Panc1 (cell line): ENCODE measurements at regions of chr11 and their contacts with region 1.

Region 1: GRCh38 chr11:12088047-12088481 is 22.3 kb upstream of the MICAL2 start:
- DNase-seq: no peak
- ATAC-seq: 0 out of 2 replicates have a peak, but pooled peaks have one; percentile 22
- H3K4me3 ChIP-seq: no peak overlapping the region
- H3K27ac ChIP-seq: peak overlapping the region; percentile 94
- H3K4me1 ChIP-seq: peaks cover 49% of the 10 kb centered on the region
- H3K27me3 ChIP-seq: no peaks in the 10 kb centered on the region
- CTCF ChIP-seq: peak; percentile 62; the same call in 1 of the 2 replicates

Region 2: DNA sequence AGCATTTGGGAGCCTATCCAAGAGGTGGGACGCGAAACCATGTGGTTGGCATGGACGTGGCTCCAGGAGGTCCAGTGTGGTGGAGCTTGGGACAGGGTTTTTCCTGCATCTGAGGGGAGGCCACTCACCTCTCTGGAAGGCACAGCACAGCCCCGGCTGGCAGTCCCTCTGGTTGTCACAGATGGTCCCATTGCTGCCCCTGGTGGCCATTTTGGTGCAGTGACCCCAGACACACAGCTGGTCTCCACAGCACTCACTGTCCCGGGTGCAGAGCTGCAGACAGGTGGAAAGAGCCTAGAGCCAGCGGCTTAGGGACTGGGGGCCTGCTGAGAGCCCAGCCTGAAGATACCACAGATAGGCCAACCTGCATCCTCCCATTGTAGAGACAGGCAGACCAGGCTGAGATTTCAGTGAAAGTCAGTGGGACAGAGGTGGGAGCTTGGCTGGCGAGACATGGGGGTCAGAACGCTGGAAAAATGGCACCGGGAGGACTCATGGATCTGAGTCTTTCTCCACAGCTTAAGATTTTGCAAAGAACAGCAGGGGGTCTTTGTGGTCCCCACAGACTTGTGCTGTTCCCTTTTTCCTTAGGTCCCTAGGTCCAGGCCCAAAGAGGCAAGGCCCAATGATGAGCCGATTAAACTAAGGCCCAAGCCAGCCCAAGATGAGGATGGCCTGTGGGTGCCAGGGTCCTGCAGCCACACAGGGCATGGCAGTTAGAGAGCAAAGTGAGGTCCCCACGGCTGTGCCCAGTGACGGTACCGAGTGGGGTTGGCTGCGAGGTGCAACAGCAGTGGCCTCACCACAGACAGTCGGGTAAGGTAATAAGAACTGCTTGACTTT is 121.0 kb before region 1 on chr11:
- CTCF ChIA-PET with region 1: no interaction called
- POLR2A ChIA-PET with region 1: no interaction called
- in situ Hi-C with region 1: no loop called
- intact Hi-C with region 1: no loop called
- DNase-seq: peak; percentile 55
- ATAC-seq: peak; percentile 94
- H3K4me3 ChIP-seq: no peak overlapping the region
- H3K27ac ChIP-seq: no peak overlapping the region
- H3K4me1 ChIP-seq: no peaks in the 10 kb centered on the region; the same call in 1 of the 2 replicates
- H3K27me3 ChIP-seq: no peaks in the 10 kb centered on the region
- CTCF ChIP-seq: peak; percentile 93

Region 3: DNA sequence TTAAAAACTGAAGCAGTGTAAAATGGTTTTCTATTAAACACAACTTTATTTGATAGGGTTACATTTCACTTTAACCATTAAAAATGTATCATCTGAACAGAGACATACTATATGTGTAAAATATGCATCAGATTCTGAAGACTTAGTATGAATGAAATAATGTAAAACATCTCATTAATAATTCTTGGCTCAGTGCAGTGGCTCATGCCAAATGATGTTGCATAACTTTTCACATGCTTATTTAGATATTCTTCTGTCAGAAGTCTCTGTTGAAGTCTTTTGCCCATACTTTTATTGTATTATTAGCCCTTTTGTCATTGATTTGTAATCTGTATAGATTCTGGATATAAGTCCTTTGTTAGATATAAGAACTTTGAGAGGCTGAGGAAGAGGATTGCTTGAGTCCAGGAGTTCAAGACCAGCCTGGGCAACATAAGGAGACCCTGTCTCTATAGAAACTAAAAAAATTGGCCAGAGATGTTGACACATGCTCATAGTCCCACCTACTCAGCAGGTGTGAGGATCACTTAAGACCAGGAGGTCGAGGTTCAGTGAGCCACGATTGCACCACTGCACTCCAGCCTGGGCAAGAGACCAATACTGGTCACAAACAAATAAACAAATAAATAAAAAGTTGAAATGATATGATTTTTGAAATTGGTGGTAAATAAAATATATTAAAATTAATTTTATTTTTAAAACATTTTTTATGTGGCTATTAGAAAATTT is 215.5 kb after region 1 on chr11:
- CTCF ChIA-PET with region 1: no interaction called
- POLR2A ChIA-PET with region 1: no interaction called
- in situ Hi-C with region 1: no loop called
- intact Hi-C with region 1: no loop called
- DNase-seq: no peak
- ATAC-seq: no peak
- H3K4me3 ChIP-seq: no peak overlapping the region
- H3K27ac ChIP-seq: no peak overlapping the region
- H3K4me1 ChIP-seq: no peaks in the 10 kb centered on the region
- H3K27me3 ChIP-seq: no peaks in the 10 kb centered on the region
- CTCF ChIP-seq: no peak

Region 4: DNA sequence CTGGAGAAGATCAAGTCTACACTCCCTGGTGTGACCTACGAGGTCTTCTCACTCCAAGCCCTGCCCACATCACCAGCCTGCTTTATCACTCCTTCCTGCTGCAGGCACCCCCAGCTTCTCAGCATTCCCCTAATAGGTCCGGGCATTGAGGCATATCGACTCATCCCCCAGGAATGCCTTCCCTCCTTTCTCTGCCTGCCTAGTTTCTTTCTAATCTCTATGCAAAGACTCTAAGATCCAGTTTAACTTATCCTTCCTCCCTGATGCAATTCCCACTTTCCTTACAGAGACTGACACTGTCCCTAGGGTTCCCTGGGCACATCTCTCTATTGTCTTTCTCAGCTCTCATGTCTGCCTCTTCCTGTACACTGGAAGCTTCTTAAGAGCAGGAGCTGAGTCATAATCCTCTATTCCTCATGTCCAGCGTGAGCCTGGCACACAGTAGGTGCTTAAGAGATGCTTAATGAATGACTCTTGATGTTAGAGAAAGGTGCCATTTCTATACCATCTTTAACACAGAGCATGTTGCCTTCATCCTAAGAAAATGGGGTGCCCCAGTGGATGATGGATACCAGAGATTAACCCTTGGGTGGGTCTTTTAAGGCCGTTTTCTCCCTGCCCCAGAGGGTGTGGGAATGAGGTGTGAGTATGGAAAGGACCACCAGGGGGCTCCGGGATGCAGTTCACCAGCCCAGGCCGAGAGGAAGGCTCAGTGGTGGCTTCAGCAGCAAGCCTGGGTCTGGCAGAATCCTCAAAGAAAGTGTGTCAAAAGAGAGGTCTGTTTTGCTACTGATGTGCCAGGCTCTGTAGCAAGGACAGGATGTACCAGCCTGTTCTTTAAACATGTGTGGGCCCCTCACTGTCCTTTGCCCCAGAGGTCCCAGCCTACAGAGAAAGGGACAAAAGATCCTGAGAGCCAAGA is 324.0 kb after region 1 on chr11:
- CTCF ChIA-PET with region 1: no interaction called
- POLR2A ChIA-PET with region 1: no interaction called
- in situ Hi-C with region 1: no loop called
- intact Hi-C with region 1: no loop called
- DNase-seq: no peak
- ATAC-seq: peak; percentile 95
- H3K4me3 ChIP-seq: no peak overlapping the region
- H3K27ac ChIP-seq: peak overlapping the region; percentile 20; the same call in 1 of the 2 replicates
- H3K4me1 ChIP-seq: peaks cover 10% of the 10 kb centered on the region
- H3K27me3 ChIP-seq: no peaks in the 10 kb centered on the region
- CTCF ChIP-seq: peak; percentile 86

Region 5: DNA sequence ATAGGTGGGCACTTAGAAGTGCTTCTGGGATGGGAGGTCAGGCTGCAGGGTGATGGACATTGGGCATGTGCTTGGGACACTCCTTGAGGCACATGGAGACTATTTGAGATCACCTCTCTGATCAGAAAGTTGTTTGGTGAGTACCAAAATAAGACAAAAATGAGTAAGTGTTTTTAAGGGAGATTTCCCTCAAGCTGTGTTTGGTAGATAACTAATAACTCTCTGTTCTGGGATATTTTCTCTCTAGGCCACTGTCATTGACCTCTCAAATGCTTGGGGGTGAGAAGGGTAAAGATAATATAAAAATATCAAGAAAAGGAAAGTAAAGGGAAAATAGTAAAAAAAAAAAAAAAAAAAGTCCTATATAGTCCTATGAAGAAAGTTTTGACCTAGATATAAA is 704.0 kb after region 1 on chr11:
- CTCF ChIA-PET with region 1: interaction called, 12 read pairs
- POLR2A ChIA-PET with region 1: no interaction called
- in situ Hi-C with region 1: no loop called
- intact Hi-C with region 1: no loop called
- DNase-seq: no peak
- ATAC-seq: no peak
- H3K4me3 ChIP-seq: no peak overlapping the region
- H3K27ac ChIP-seq: no peak overlapping the region
- H3K4me1 ChIP-seq: no peaks in the 10 kb centered on the region
- H3K27me3 ChIP-seq: no peaks in the 10 kb centered on the region
- CTCF ChIP-seq: no peak